GM12878 (cell line): ENCODE measurements at regions of chr4 and their contacts with region 1.

Region 1: GRCh38 chr4:79163981-79164490 is 161.8 kb downstream of the NAA11 start:
- DNase-seq: no peak
- ATAC-seq: peak; percentile 85
- H3K4me3 ChIP-seq: no peak overlapping the region
- H3K27ac ChIP-seq: no peak overlapping the region
- H3K4me1 ChIP-seq: peaks cover 4% of the 10 kb centered on the region
- H3K27me3 ChIP-seq: no peaks in the 10 kb centered on the region
- CTCF ChIP-seq: no peak
- EP300 ChIP-seq: no peak
- POLR2A ChIP-seq: no peak
- RAD21 ChIP-seq: no peak

Region 2: DNA sequence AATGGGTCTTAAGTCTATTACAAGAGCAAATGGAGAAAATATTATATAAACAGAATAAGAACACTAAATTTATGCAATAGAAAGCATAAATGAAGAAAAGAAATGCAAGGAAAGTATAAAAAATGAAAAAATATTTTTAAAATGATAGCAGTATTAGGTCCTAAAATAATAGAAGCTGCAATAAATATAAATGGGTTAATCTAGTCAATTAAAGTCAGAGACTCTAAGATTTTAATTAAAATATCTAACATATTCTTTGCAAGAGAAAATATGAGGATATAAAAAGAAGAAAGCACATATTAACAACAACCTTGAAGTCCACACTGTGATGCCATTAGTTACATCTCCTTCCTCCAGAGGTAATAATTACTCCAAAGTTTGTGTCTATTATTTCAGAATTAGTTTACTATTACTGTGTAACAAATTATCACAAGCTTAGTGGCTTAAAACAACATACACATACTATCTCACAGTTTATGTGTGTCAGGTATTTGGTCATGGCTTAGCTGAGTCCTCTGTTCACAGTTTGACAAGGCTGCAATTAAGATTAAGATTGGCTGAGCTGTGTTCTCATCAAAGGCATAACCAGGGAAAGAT is 13.1 kb before region 1 on chr4:
- CTCF ChIA-PET with region 1: no interaction called
- POLR2A ChIA-PET with region 1: interaction called, 4 read pairs
- RAD21 ChIA-PET with region 1: interaction called, 6 read pairs
- SMC1A ChIA-PET with region 1: interaction called, 10 read pairs
- in situ Hi-C with region 1: no loop called
- intact Hi-C with region 1: no loop called
- DNase-seq: no peak
- ATAC-seq: no peak
- H3K4me3 ChIP-seq: no peak overlapping the region
- H3K27ac ChIP-seq: no peak overlapping the region
- H3K4me1 ChIP-seq: no peaks in the 10 kb centered on the region
- H3K27me3 ChIP-seq: no peaks in the 10 kb centered on the region
- CTCF ChIP-seq: no peak
- EP300 ChIP-seq: no peak
- POLR2A ChIP-seq: no peak
- RAD21 ChIP-seq: no peak

Region 3: DNA sequence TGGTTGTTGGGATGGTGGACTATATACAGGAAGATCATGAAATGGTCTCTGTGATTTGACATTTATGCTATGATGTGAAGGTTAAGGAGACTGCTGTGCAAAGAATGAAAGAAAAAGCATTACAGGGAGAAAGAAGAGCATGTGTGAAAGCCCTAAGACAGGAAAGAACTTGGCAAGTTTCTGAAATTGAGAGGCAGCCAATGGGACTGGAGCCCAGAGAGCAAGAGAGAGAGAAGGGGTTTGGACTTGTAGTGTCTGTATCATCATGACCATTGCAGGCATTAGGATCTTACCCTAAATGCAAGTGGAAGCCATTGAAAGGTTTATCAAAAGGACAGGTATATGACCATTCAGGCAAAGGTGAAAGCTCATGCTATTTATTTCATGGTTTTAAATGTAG is 14.7 kb after region 1 on chr4:
- CTCF ChIA-PET with region 1: interaction called, 7 read pairs
- POLR2A ChIA-PET with region 1: interaction called, 4 read pairs
- RAD21 ChIA-PET with region 1: interaction called, 6 read pairs
- SMC1A ChIA-PET with region 1: interaction called, 50 read pairs
- in situ Hi-C with region 1: no loop called
- intact Hi-C with region 1: no loop called
- DNase-seq: no peak
- ATAC-seq: no peak
- H3K4me3 ChIP-seq: no peak overlapping the region
- H3K27ac ChIP-seq: no peak overlapping the region
- H3K4me1 ChIP-seq: no peaks in the 10 kb centered on the region
- H3K27me3 ChIP-seq: no peaks in the 10 kb centered on the region
- CTCF ChIP-seq: no peak
- EP300 ChIP-seq: no peak
- POLR2A ChIP-seq: no peak
- RAD21 ChIP-seq: no peak

Region 4: DNA sequence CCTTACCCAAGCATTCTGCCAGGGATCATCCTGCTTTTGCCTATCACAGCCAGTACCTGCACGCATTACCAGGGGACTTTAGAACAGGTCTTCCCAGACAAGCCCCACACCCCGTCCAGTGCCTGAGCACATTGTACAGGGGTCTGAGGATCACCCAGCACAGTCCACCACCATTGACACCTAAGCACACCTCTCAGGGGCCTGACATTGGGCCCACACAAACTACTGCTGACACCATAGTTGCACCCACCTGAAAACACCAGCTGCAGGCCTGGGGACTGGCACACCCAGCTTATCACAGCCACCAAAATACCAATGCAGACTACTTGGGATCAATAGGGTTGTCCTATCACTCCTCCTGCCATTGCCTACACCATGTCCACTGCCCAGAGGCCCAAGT is 176.5 kb after region 1 on chr4:
- CTCF ChIA-PET with region 1: no interaction called
- POLR2A ChIA-PET with region 1: no interaction called
- RAD21 ChIA-PET with region 1: no interaction called
- SMC1A ChIA-PET with region 1: no interaction called
- in situ Hi-C with region 1: no loop called
- intact Hi-C with region 1: no loop called
- DNase-seq: no peak
- ATAC-seq: no peak
- H3K4me3 ChIP-seq: no peak overlapping the region
- H3K27ac ChIP-seq: no peak overlapping the region
- H3K4me1 ChIP-seq: no peaks in the 10 kb centered on the region
- H3K27me3 ChIP-seq: no peaks in the 10 kb centered on the region
- CTCF ChIP-seq: no peak
- EP300 ChIP-seq: no peak
- POLR2A ChIP-seq: no peak
- RAD21 ChIP-seq: no peak